Right ventricle myocardium inferior (tissue), 1 donor: ENCODE measurements at regions of chr22 and their contacts with region 1.

Region 1: DNA sequence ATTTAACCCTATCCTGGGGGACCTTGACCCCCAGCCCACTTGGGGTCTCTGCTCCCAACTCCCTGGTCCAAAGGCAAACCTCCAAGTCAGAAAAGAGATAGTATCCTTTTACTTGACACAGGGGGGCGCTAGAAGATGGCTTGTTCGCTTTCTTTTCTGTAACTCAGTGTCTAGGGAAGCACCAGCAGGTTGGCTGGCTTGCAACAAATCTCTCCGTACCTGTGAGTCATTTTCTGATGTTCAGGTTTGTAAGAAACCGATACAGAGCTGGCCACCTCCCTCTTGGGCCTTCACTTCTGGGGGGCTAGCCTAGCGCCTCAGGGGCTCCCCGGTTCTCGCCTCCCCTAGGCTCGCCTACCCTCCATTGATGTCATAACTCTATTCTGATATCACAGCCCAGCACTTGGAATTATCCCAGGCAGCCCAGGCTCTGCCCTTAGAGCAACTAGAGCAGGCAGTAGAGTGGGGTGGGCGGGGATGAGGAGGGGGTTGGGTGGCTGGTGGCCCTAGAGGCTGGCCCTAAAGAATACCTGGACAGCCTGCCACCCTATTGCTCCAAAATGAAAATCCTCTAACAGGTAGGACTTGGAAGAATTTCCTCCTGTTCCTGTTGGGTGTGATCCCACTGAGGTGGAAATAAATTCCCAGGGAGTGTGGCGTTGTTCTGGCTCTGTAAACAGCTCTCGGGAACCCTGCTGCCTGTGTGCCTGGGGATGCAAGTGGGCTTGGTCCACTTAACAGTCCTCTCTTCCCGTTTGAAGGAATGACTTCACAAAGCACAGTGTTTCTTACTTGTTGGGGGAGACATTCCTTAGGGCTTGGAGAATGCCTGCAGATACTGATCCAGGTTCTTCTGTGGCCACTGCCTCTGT is 69.4 kb downstream of the OSBP2 start:
- DNase-seq: no peak
- ATAC-seq: peak; percentile 34

Region 2: DNA sequence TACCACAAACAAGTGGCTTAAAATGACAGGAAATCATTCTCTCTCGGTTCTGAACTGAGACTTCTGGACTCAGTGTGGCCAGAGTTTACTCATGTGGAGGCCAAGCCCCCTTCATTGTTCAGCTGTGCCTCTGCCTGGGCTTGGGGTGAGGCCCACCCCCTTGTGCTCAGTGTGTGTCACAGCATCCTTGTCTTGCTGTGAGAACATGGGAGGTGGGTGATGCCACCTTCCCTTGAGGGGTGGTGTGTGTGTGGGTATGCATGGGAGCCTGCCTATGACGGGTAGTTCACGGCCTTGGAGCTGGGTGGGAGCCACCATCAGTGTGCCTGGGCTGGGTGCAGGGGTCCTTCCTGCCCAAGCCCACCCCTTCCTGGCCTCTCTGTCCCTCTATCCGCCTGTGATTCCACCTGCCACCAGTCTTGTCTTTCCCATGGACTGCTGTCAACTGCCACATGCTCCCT is 102.8 kb after region 1 on chr22:
- intact Hi-C with region 1: no loop called
- DNase-seq: no peak
- ATAC-seq: no peak

Region 3: DNA sequence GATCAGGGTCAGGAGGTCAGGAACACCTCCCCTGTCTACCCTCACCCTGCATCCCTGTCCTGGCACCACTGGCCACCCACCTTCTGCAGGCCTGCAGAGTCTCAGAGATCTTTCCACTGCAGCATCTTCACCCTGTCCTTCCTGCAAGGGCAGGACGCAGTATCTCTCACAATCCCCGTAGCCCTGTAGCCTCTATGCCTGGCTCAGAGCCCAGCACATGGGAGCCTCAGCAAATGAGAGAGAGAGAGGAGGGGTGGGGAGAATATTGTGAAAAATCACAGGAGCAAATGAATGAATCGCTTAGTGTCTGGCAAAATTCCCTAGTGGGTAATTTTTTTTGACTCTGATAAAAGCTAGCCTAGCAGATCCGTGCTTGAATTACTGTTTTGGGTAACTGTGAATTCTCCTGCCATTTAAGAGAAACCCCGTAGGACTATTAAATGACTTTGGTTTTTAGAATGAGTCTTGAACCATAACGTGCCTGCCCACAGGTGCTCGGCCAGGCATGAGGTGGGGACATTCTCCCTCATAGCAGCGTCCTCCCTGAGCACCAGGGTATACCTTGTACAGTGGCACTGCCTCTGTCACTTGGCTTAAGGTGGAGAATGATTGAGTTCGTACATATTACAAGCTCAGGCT is 113.0 kb after region 1 on chr22:
- intact Hi-C with region 1: loop called (anchors 10 kb)
- DNase-seq: no peak
- ATAC-seq: peak; percentile 62

Region 4: DNA sequence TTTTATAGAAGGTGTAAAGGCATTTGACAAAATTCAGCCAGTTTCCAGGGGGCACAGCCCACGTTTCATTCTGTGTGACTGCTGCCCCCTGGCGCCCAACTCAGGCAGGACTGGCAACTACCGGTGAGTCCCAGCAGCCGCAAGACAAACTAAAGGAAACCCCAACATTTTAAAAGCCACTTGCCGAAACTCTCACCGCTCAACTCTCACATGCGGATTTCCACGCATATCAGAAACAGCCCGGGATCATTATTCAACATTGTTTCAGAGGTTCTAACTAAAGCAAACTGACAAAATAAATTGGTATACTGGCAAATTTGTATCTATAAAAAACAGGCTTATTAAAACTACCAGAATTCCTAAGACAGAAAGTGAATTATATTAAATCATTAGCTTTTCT is 156.4 kb after region 1 on chr22:
- intact Hi-C with region 1: loop called (anchors 1 kb)
- DNase-seq: peak; percentile 88
- ATAC-seq: peak; percentile 76